Posterior vena cava (tissue), 2 donors: ENCODE measurements at regions of chr15 and their contacts with region 1.

Region 1: GRCh38 chr15:48358229-48358641 is 27.0 kb downstream of the DUT start:
- DNase-seq: no peak

Region 2: DNA sequence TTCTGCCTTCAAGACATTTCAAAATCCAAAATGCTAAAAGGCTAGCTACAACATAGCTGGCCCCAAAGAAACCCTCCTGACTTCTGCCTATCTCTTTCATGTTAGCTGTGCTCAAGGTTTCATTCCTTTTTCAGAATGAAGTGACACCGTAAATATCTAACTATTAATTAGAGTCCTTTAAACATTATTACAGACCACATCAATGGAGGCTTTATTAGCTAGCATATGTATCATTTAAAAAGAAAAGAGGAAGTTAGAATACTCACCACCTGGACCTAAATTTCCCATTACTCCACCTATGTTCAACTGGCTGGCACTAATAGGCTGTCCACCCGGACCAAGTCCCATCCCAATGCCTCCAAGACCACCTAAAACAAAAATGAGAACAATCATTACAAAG is 204.7 kb before region 1 on chr15:
- intact Hi-C with region 1: no loop called
- DNase-seq: no peak

Region 3: DNA sequence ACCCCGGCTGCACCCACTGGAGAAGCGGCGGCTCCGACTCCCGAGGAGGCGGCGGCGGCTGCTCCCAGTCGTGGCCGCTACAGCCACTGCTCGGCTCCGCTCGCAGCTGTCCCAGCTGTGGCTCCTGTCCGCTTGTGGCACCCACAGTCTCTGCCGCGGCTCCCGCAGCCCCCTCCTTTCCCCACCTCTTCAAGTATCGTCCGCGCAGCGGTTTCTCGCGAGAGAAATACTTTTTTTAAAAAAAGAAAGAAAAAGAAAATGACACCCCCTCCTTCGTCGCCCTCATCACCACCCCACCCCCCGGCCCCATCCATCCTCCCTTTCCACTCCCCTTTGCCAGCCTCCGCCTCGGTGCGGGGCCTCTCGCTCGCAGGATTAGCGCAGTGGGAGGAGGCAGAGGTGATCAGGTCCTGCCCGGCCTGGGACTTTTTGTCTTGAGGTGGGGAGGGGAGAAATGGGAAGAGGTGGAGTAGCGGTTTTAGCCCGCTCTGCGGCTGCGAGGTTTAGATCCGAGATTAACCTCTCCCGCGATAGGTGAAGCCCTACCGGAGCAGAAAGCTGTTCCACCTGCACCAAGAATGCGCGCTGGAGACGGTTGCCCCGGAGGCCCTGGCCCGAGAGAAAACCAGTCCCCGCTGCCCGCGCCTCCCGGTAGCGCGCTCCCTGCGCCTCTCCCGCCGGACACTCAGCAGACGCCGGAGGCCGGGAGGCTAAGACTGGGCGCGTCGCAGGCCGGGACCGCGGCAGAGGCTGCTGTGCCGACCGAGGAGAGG is 287.5 kb after region 1 on chr15 and contains the start of gene FBN1:
- intact Hi-C with region 1: loop called in 1 of 2 experiments (anchors 5 kb)
- DNase-seq: peak; percentile 95
- total RNA-seq, gene FBN1: 194 to 541 TPM

Region 4: DNA sequence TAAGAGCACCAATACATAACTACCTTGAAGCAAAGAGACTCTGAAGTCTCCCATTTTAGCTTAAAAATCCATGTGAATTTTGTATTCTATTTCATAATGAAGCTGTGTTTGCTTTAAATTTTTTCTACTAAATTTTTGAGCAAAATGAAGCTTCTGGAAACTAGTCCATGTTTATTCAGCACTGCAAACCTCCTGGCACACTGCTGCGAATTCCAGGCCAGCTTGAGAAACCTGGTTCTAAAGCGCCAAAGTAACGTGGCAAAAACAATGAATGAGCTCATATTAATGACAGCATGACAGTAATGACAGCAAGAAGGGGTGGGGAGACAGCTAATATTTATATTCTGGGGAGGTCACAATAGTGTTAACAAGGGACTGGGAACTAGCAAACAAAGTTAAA is 427.0 kb after region 1 on chr15:
- intact Hi-C with region 1: loop called in 1 of 2 experiments (anchors 10 kb)
- DNase-seq: peak; percentile 79

Region 5: DNA sequence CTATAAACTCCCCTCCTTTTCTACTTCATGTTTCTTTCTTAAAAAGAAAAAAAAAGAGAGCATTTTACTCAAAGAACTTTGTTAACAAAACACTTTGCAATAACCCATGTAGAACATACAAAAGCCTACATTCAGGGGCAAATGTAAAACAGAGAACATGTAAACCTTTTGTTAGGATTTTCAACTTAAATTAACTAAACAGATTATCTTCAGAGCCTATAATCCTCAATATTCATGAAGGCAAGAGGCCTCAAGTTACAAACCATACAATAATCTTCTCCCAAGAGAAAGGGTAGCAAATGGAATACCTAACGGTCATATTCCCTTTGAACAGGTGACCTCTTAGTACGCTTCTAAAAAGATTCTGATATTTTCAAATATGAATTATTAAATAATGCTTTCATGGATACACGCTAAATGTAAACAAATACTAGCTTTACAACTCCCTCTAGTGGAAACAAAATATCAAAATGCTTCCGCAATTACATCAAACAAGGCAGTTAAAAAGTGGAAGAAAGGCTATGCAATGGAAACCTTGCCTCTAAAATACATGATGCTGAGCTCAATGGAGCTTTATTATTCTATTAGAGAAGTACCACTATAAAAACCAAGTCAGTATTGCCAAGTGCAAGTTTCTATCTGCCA is 442.7 kb after region 1 on chr15:
- intact Hi-C with region 1: loop called in 1 of 2 experiments (anchors 5 kb)
- DNase-seq: no peak